Activated T-helper 2 cell treated with anti-CD3 and anti-CD28 coated beads, Interferon-gamma antibody, Interleukin-2, Interleukin-4, amounts not matched to agents 10 μg/mL and 5 μg/mL and 100 μg/mL, durations not matched to agents 14 hours and 24 hours and 36 hours (primary cell): ENCODE measurements at regions of chr2 and their contacts with region 1.

Region 1: GRCh38 chr2:204108330-204108751 is 171.8 kb downstream of the ICOS start:
- DNase-seq: peak; percentile 20
- H3K4me3 Mint-ChIP-seq: peak overlapping the region; percentile 64
- H3K27ac Mint-ChIP-seq: peak overlapping the region; percentile 89
- H3K4me1 Mint-ChIP-seq: peaks cover 75% of the 10 kb centered on the region
- H3K27me3 Mint-ChIP-seq: no peaks in the 10 kb centered on the region

Region 2: DNA sequence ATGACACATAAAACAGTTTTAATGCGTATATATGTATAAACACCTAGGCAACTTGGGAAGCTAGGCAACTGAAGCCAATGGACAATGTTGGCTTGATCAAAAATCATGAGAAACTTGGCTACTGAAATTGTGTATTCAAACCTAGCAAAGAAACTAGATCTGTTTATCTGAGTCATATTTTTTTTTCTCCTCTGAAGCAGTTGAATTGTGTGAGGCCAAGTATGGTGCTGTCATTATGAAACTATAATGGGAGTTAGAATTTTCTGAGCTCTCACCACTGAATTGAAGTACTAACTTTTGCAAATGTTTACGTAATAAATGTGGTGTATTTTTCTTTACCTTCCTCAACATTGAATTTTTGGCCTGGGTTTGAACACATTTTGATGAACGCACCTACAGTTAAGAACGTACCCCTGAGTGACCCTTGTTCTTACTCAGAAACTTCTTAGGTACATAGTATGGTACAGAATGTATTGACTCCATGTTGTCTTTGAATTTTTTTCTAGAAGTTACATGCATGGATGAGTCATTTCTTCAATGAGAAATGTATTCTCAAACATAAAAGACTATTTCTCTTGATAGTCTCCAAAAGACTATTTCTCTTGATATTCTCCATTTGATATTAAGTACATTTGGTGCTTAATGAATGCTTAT is 378.1 kb before region 1 on chr2:
- intact Hi-C with region 1: loop called (anchors 10 kb)
- DNase-seq: no peak
- H3K4me3 Mint-ChIP-seq: peak overlapping the region; percentile 1
- H3K27ac Mint-ChIP-seq: peak overlapping the region; percentile 83
- H3K4me1 Mint-ChIP-seq: peaks cover 75% of the 10 kb centered on the region
- H3K27me3 Mint-ChIP-seq: no peaks in the 10 kb centered on the region

Region 3: DNA sequence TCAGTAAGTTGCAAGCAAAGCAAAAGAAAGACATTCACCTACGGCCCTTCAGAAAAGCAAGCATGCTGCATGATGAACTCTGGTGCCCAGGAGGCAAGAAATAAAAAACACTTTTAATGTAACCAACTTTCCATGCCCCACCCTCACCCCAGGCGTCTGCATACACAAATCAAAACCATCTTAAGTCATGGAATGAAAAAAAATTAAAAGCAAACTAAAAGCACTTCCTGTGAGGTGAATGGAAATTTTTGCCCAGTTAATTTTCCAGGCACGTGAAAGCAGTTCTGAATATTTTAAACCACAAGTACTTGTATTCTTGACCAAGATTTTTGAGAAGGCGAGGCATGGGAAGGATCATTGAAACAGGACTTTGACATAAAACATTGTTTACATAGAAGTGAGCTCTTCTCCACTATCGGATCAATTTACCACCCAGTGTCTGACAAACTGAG is 174.3 kb before region 1 on chr2:
- intact Hi-C with region 1: loop called (anchors 1 kb)
- DNase-seq: peak; percentile 59
- H3K4me3 Mint-ChIP-seq: peak overlapping the region; percentile 61
- H3K27ac Mint-ChIP-seq: peak overlapping the region; percentile 87
- H3K4me1 Mint-ChIP-seq: peaks cover 44% of the 10 kb centered on the region
- H3K27me3 Mint-ChIP-seq: no peaks in the 10 kb centered on the region

Region 4: GRCh38 chr2:204024503-204024902 is 83.8 kb before region 1 on chr2:
- intact Hi-C with region 1: loop called (anchors 2 kb)
- DNase-seq: no peak
- H3K4me3 Mint-ChIP-seq: no peak overlapping the region
- H3K27ac Mint-ChIP-seq: no peak overlapping the region
- H3K4me1 Mint-ChIP-seq: peaks cover 49% of the 10 kb centered on the region
- H3K27me3 Mint-ChIP-seq: peaks cover 1% of the 10 kb centered on the region

Region 5: DNA sequence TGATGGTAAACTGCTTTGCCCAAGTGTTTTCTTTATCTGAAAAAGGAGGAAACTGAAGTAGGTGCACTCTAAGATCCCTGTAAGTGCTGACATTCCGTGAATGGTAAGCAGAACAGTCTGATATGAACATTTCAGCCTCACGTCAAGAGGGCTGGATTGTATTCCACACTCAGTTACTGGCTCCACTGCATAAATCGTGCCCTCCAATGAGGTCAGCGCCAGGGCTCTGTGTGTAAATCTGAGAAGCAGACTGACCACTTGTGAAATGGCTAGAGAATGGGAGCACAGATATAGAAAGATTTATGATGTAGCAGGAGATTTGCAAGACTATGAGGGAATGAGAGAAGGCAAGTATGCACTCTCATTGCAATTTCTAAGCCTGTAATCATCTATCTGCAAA is 18.8 kb before region 1 on chr2:
- intact Hi-C with region 1: no loop called
- DNase-seq: no peak
- H3K4me3 Mint-ChIP-seq: no peak overlapping the region
- H3K27ac Mint-ChIP-seq: no peak overlapping the region
- H3K4me1 Mint-ChIP-seq: no peaks in the 10 kb centered on the region
- H3K27me3 Mint-ChIP-seq: peaks cover 25% of the 10 kb centered on the region

Region 6: GRCh38 chr2:204177977-204178540 is 69.7 kb after region 1 on chr2:
- intact Hi-C with region 1: loop called (anchors 2 kb)
- DNase-seq: peak; percentile 55
- H3K4me3 Mint-ChIP-seq: no peak overlapping the region
- H3K27ac Mint-ChIP-seq: no peak overlapping the region
- H3K4me1 Mint-ChIP-seq: peaks cover 9% of the 10 kb centered on the region
- H3K27me3 Mint-ChIP-seq: peaks cover 42% of the 10 kb centered on the region

Region 7: DNA sequence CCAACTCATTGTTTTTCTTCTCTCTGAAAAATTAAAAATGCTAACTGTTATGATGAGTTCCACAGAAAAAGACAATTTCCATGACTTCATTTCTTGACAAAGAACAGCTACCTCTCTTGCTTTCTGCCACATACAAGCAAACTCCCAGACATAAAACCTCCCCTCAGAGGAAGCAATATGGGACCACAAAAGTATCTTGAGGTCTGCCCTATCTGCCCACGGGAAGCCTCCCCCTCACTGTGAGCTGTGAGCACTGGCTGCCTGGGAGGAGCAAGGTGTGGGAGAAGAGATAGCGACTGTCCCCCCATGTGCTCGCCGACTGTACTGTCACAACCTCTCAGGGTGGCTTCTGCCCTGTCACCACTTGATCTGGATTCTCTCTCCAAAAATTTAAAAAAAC is 1504.3 kb after region 1 on chr2:
- intact Hi-C with region 1: loop called (anchors 2 kb)
- DNase-seq: peak; percentile 41
- H3K4me3 Mint-ChIP-seq: peak overlapping the region; percentile 38
- H3K27ac Mint-ChIP-seq: peak overlapping the region; percentile 91
- H3K4me1 Mint-ChIP-seq: peaks cover 60% of the 10 kb centered on the region
- H3K27me3 Mint-ChIP-seq: no peaks in the 10 kb centered on the region